ENCODE measurements at regions of chr6 and their contacts with region 1.

Region 1: GRCh38 chr6:7723041-7723447 is 2.9 kb upstream of the BMP6 start:
- DNase-seq: peak in 31 of 35 experiments; percentile 14 to 65 (median 44)
- ATAC-seq: peak in 1 of 4 experiments; percentile 36
- H3K4me3 ChIP-seq: no peak overlapping the region
- H3K4me3 Mint-ChIP-seq: no peak overlapping the region
- H3K27ac ChIP-seq: no peak overlapping the region
- H3K27ac Mint-ChIP-seq: no peak overlapping the region
- H3K4me1 ChIP-seq: peaks cover 7 to 21% of the 10 kb centered on the region in 2 experiments
- H3K4me1 Mint-ChIP-seq: peaks cover 2 to 15% (median 12%) of the 10 kb centered on the region in 3 donors
- H3K27me3 ChIP-seq: peaks cover 8 to 38% of the 10 kb centered on the region in 2 experiments
- H3K27me3 Mint-ChIP-seq: peaks cover 48 to 58% of the 10 kb centered on the region in 2 donors

Region 2: GRCh38 chr6:7759319-7759718 is 36.3 kb after region 1 on chr6:
- CTCF ChIA-PET with region 1: no interaction called
- POLR2A ChIA-PET with region 1: interaction called in 1 of 2 experiments, 16 read pairs
- DNase-seq: no peak
- ATAC-seq: no peak
- H3K4me3 ChIP-seq: no peak overlapping the region
- H3K4me3 Mint-ChIP-seq: no peak overlapping the region
- H3K27ac ChIP-seq: no peak overlapping the region
- H3K27ac Mint-ChIP-seq: no peak overlapping the region
- H3K4me1 ChIP-seq: no peaks in the 10 kb centered on the region
- H3K4me1 Mint-ChIP-seq: no peaks in the 10 kb centered on the region
- H3K27me3 ChIP-seq: peaks cover 0 to 3% of the 10 kb centered on the region in 2 experiments
- H3K27me3 Mint-ChIP-seq: peaks cover 23 to 33% of the 10 kb centered on the region in 2 donors

Region 3: GRCh38 chr6:8013763-8014162 is 290.7 kb after region 1 on chr6:
- CTCF ChIA-PET with region 1: interaction called in 1 of 2 experiments, 11 read pairs
- POLR2A ChIA-PET with region 1: no interaction called
- DNase-seq: no peak
- ATAC-seq: no peak
- H3K4me3 ChIP-seq: no peak overlapping the region
- H3K4me3 Mint-ChIP-seq: no peak overlapping the region
- H3K27ac ChIP-seq: no peak overlapping the region
- H3K27ac Mint-ChIP-seq: no peak overlapping the region
- H3K4me1 ChIP-seq: no peaks in the 10 kb centered on the region
- H3K4me1 Mint-ChIP-seq: peaks cover 0 to 15% (median 0%) of the 10 kb centered on the region in 3 donors
- H3K27me3 ChIP-seq: no peaks in the 10 kb centered on the region
- H3K27me3 Mint-ChIP-seq: no peaks in the 10 kb centered on the region

Region 4: GRCh38 chr6:8063761-8064637 is 341.0 kb after region 1 on chr6 and contains the start of gene BLOC1S5:
- CTCF ChIA-PET with region 1: interaction called, 5 to 11 read pairs
- POLR2A ChIA-PET with region 1: no interaction called
- DNase-seq: peak; percentile 87 to 98 (median 96)
- ATAC-seq: peak; percentile 94 to 96 (median 95)
- H3K4me3 ChIP-seq: peak within 1 kb of the TSS; percentile 87 to 93
- H3K4me3 Mint-ChIP-seq: peak within 1 kb of the TSS; percentile 86 to 96 (median 93)
- H3K27ac ChIP-seq: peak within 1 kb of the TSS; percentile 84
- H3K27ac Mint-ChIP-seq: peak within 1 kb of the TSS; percentile 92 to 94
- H3K4me1 ChIP-seq: peaks cover 3 to 20% of the 10 kb centered on the region in 2 experiments
- H3K4me1 Mint-ChIP-seq: peaks cover 29 to 39% (median 32%) of the 10 kb centered on the region in 3 donors
- H3K27me3 ChIP-seq: no peaks in the 10 kb centered on the region
- H3K27me3 Mint-ChIP-seq: no peaks in the 10 kb centered on the region
- total RNA-seq, gene BLOC1S5: 12.3 to 26.9 (median 18.1) TPM

Region 5: GRCh38 chr6:8219352-8219943 is 496.4 kb after region 1 on chr6:
- CTCF ChIA-PET with region 1: interaction called in 1 of 2 experiments, 17 read pairs
- POLR2A ChIA-PET with region 1: no interaction called
- DNase-seq: peak in 20 of 35 experiments; percentile 1 to 68 (median 12)
- ATAC-seq: peak in 2 of 4 experiments; percentile 41 to 45
- H3K4me3 ChIP-seq: no peak overlapping the region
- H3K4me3 Mint-ChIP-seq: no peak overlapping the region
- H3K27ac ChIP-seq: no peak overlapping the region
- H3K27ac Mint-ChIP-seq: no peak overlapping the region
- H3K4me1 ChIP-seq: no peaks in the 10 kb centered on the region
- H3K4me1 Mint-ChIP-seq: no peaks in the 10 kb centered on the region
- H3K27me3 ChIP-seq: peaks cover 0 to 3% of the 10 kb centered on the region in 2 experiments
- H3K27me3 Mint-ChIP-seq: peaks cover 9 to 16% of the 10 kb centered on the region in 2 donors

Measured in T-cell (primary cell).